Activated naive CD4-positive, alpha-beta T cell treated with anti-CD3 and anti-CD28 coated beads for 36 hours (primary cell): ENCODE measurements at regions of chr1 and their contacts with region 1.

Region 1: GRCh38 chr1:248243204-248243603 is 12.0 kb downstream of the OR2M4 start:
- DNase-seq: peak; percentile 35
- H3K4me3 Mint-ChIP-seq: no peak overlapping the region
- H3K27ac Mint-ChIP-seq: no peak overlapping the region
- H3K4me1 Mint-ChIP-seq: peaks cover 2% of the 10 kb centered on the region
- H3K27me3 Mint-ChIP-seq: peaks cover 12% of the 10 kb centered on the region

Region 2: GRCh38 chr1:247936415-247936814 is 306.8 kb before region 1 on chr1:
- CTCF ChIA-PET with region 1: no interaction called
- intact Hi-C with region 1: loop called (anchors 1 kb)
- DNase-seq: no peak
- H3K4me3 Mint-ChIP-seq: no peak overlapping the region
- H3K27ac Mint-ChIP-seq: no peak overlapping the region
- H3K4me1 Mint-ChIP-seq: no peaks in the 10 kb centered on the region
- H3K27me3 Mint-ChIP-seq: peaks cover 4% of the 10 kb centered on the region

Region 3: DNA sequence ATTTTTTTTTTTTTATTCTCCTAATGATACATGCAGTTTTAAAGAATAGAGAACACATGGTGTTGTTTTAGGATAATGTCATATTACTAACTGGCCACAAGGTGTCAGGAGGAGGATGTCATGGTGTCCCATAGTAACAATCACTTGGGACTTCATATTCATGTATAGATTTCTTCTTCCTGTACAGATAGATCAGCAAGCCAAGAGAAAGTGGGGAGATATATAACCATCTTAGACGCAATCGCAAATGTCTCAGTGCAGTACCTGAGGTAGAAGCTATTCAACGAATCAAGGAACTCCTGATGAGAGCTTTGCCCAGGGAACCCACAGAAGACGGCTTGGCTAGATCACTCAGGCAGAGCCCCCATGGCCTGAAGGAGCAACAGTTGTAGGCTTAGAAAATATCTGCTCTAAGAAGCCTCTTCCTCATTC is 379.4 kb after region 1 on chr1:
- CTCF ChIA-PET with region 1: no interaction called
- intact Hi-C with region 1: loop called (anchors 2 kb)
- DNase-seq: peak; percentile 19
- H3K4me3 Mint-ChIP-seq: no peak overlapping the region
- H3K27ac Mint-ChIP-seq: no peak overlapping the region
- H3K4me1 Mint-ChIP-seq: peaks cover 2% of the 10 kb centered on the region
- H3K27me3 Mint-ChIP-seq: no peaks in the 10 kb centered on the region

Region 4: DNA sequence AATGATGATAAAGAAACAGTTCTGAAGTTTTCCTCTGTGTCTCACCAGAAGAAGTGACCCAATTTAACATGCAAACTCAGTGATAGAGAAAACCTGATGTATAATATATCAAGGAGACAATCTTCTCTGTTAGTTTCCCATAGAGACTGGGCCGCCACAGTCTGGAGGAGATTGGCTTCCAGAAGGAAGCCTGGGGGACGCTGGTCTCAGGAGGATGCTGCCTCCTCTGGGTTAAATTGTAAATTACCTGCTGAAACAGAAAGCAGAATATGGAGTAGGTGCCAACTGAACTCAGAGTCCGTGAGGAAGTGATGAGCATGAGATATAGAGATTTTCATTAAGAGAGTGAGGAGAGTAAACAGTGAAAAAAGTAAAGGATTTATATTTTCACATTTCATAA is 443.6 kb after region 1 on chr1:
- CTCF ChIA-PET with region 1: interaction called, 3 read pairs
- intact Hi-C with region 1: loop called (anchors 10 kb)
- DNase-seq: peak; percentile 44
- H3K4me3 Mint-ChIP-seq: no peak overlapping the region
- H3K27ac Mint-ChIP-seq: no peak overlapping the region
- H3K4me1 Mint-ChIP-seq: peaks cover 6% of the 10 kb centered on the region
- H3K27me3 Mint-ChIP-seq: peaks cover 8% of the 10 kb centered on the region

Region 5: DNA sequence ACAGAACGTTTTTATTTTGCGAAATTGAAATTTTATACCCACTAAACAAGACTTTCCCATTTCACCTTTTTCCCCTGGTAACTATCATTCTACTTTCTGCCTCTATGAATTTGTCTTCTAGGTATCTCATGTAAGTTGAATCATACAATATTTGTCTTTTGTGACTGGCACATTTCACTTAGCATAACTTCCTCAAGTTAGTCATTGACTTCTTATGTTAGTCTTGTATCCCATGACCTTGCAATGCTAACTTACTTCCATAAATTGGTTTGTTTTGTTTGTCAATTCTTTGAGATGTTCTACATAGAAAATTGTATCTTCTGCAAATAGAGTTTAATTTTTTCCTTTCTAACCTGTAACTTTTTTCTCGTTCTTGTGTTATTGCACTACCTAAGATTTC is 555.6 kb after region 1 on chr1:
- CTCF ChIA-PET with region 1: no interaction called
- intact Hi-C with region 1: loop called (anchors 5 kb)
- DNase-seq: no peak
- H3K4me3 Mint-ChIP-seq: no peak overlapping the region
- H3K27ac Mint-ChIP-seq: no peak overlapping the region
- H3K4me1 Mint-ChIP-seq: no peaks in the 10 kb centered on the region
- H3K27me3 Mint-ChIP-seq: peaks cover 5% of the 10 kb centered on the region